SK-N-SH (cell line): ENCODE measurements at regions of chr7 and their contacts with region 1.

Region 1: GRCh38 chr7:44240983-44241510 is 40.3 kb downstream of the YKT6 start:
- DNase-seq: peak; percentile 96
- H3K4me3 ChIP-seq: no peak overlapping the region
- H3K27ac ChIP-seq: no peak overlapping the region
- H3K4me1 ChIP-seq: peaks cover 0 to 32% of the 10 kb centered on the region in 2 experiments; a peak in 1 of 4 replicates
- H3K27me3 ChIP-seq: no peaks in the 10 kb centered on the region
- CTCF ChIP-seq: peak; percentile 92
- EP300 ChIP-seq: no peak
- RAD21 ChIP-seq: peak; percentile 95

Region 2: GRCh38 chr7:44212018-44212417 is 29.0 kb before region 1 on chr7:
- CTCF ChIA-PET with region 1: interaction called, 19 read pairs
- POLR2A ChIA-PET with region 1: interaction called, 4 read pairs
- DNase-seq: no peak
- H3K4me3 ChIP-seq: no peak overlapping the region
- H3K27ac ChIP-seq: no peak overlapping the region
- H3K4me1 ChIP-seq: peaks cover 0 to 16% of the 10 kb centered on the region in 2 experiments; a peak in 1 of 4 replicates
- H3K27me3 ChIP-seq: no peaks in the 10 kb centered on the region
- CTCF ChIP-seq: no peak
- EP300 ChIP-seq: no peak
- RAD21 ChIP-seq: no peak

Region 3: GRCh38 chr7:44257618-44258422 is 16.8 kb after region 1 on chr7:
- CTCF ChIA-PET with region 1: interaction called, 101 read pairs
- POLR2A ChIA-PET with region 1: no interaction called
- DNase-seq: peak; percentile 87
- H3K4me3 ChIP-seq: no peak overlapping the region
- H3K27ac ChIP-seq: peak overlapping the region; percentile 1 to 41
- H3K4me1 ChIP-seq: peaks cover 25 to 38% of the 10 kb centered on the region in 2 experiments; a peak in 3 of 4 replicates
- H3K27me3 ChIP-seq: no peaks in the 10 kb centered on the region
- CTCF ChIP-seq: peak; percentile 32
- EP300 ChIP-seq: no peak
- RAD21 ChIP-seq: peak; percentile 25; the same call in 1 of the 2 replicates

Region 4: GRCh38 chr7:44291066-44291732 is 50.2 kb after region 1 on chr7:
- CTCF ChIA-PET with region 1: interaction called, 34 read pairs
- POLR2A ChIA-PET with region 1: no interaction called
- DNase-seq: peak; percentile 39
- H3K4me3 ChIP-seq: no peak overlapping the region
- H3K27ac ChIP-seq: peak overlapping the region in 1 of 2 experiments; percentile 28; a peak in 1 of 4 replicates
- H3K4me1 ChIP-seq: peaks cover 0 to 54% of the 10 kb centered on the region in 2 experiments; a peak in 2 of 4 replicates
- H3K27me3 ChIP-seq: peaks cover 45% of the 10 kb centered on the region
- CTCF ChIP-seq: no peak
- EP300 ChIP-seq: no peak
- RAD21 ChIP-seq: no peak

Region 5: DNA sequence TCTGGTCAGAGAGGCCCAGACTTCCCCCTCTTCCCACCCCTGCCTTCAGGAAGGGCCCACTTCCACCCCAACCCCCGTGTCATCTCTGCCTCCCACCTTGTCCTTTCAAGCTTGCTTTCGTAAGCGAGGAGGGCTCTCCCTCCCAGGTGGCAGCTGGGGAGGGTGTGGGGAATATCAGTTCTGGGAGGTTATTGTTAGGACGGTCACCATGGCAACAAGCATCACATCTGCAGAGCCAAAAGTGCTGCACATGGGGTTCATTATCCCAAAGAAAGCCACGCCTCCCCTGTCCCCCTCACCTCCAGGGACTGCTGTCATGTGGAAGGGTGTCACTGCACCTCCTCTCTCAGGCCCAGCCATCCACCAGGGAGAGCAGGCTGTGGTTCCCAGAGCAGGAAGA is 86.9 kb after region 1 on chr7:
- CTCF ChIA-PET with region 1: interaction called, 19 read pairs
- POLR2A ChIA-PET with region 1: no interaction called
- DNase-seq: peak; percentile 46
- H3K4me3 ChIP-seq: no peak overlapping the region
- H3K27ac ChIP-seq: no peak overlapping the region
- H3K4me1 ChIP-seq: peaks cover 0 to 16% of the 10 kb centered on the region in 2 experiments; a peak in 1 of 4 replicates
- H3K27me3 ChIP-seq: peaks cover 40% of the 10 kb centered on the region
- CTCF ChIP-seq: no peak
- EP300 ChIP-seq: no peak
- RAD21 ChIP-seq: no peak

Region 6: GRCh38 chr7:44470135-44470479 is 229.1 kb after region 1 on chr7:
- CTCF ChIA-PET with region 1: interaction called, 17 read pairs
- POLR2A ChIA-PET with region 1: no interaction called
- DNase-seq: no peak
- H3K4me3 ChIP-seq: no peak overlapping the region
- H3K27ac ChIP-seq: peak overlapping the region; percentile 36 to 45; a peak in 2 of 4 replicates
- H3K4me1 ChIP-seq: peaks cover 24 to 43% of the 10 kb centered on the region in 2 experiments
- H3K27me3 ChIP-seq: no peaks in the 10 kb centered on the region
- CTCF ChIP-seq: no peak
- EP300 ChIP-seq: no peak
- RAD21 ChIP-seq: no peak

Region 7: GRCh38 chr7:44548893-44549292 is 307.8 kb after region 1 on chr7:
- CTCF ChIA-PET with region 1: no interaction called
- POLR2A ChIA-PET with region 1: no interaction called
- DNase-seq: no peak
- H3K4me3 ChIP-seq: no peak overlapping the region
- H3K27ac ChIP-seq: no peak overlapping the region
- H3K4me1 ChIP-seq: no peaks in the 10 kb centered on the region
- H3K27me3 ChIP-seq: peaks cover 8% of the 10 kb centered on the region; the same call in 1 of the 2 replicates
- CTCF ChIP-seq: no peak
- EP300 ChIP-seq: no peak
- RAD21 ChIP-seq: no peak

Region 8: DNA sequence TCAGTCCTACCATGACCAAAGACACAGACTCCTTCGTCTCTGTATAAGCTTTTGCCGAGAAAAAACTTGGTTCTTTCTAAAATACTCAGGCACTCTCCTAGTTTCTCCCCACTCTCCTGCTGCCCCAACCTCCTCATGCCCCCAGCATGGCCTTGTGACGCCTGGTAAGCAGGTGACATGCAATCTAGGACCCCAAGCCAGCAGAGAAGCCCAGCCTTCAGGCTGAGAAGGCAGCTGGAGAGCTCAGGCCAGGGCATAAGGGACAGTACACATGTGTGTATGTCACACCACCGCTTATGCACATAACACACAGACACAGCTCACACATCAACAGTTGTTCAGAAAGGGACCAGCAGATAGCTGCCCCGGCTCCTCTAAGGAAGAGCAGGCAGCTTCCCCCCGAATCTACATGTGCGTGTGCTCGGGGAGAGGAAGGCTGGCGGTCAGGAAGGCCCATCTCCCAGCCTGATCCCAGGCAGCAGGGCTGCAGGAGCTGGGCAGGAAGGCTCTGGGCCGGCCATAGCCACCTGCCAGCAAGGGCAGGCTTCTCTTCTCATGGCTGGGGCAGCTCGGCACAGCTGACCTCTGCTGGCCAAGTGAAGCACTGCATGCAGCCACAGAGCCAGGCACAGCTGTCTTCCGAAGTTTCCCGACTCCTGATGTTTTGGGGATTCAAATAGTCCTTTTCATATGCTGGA is 324.2 kb after region 1 on chr7:
- CTCF ChIA-PET with region 1: interaction called, 53 read pairs
- POLR2A ChIA-PET with region 1: no interaction called
- DNase-seq: peak; percentile 80
- H3K4me3 ChIP-seq: no peak overlapping the region; a peak in 1 of 4 replicates
- H3K27ac ChIP-seq: no peak overlapping the region
- H3K4me1 ChIP-seq: peaks cover 4 to 5% of the 10 kb centered on the region in 2 experiments; a peak in 2 of 4 replicates
- H3K27me3 ChIP-seq: no peaks in the 10 kb centered on the region
- CTCF ChIP-seq: peak; percentile 99
- EP300 ChIP-seq: no peak
- RAD21 ChIP-seq: peak; percentile 78